Pancreas (tissue), 10 donors: ENCODE measurements at regions of chr7 and their contacts with region 1.

Region 1: DNA sequence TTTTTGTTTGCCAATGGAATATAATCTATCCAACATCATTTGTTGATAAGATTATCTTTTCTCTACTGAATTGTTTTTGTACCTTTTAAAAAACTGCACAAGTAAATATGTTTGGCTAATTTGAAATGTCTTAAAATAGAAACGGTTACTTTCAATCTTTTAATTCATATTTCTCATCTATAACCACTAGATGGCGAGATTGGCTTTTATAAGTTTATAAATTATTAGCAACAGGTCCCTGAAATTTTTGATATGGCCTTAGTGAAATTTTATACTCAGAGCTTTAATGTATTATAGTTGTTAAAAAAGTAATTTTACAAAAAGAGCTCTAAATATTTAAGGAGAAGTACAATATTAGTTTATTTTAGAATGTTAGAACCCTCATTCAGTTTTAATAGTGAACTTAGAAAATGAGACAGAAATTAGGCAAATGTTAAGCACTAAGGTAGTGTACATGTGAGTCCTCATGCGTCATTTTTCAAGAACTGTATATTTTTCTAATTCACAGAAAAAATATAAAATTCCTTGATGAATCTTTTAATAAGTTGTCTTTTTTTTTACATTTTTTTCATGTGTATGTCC is 592.5 kb downstream of the ARL4A start:
- DNase-seq: no peak
- ATAC-seq: no peak
- H3K4me3 ChIP-seq: no peak overlapping the region
- H3K27ac ChIP-seq: no peak overlapping the region
- H3K4me1 ChIP-seq: peaks cover 0 to 4% (median 0%) of the 10 kb centered on the region in 3 donors
- H3K27me3 ChIP-seq: peaks cover 0 to 8% (median 0%) of the 10 kb centered on the region in 4 donors
- CTCF ChIP-seq: peak in 3 of 4 donors; percentile 26 to 28 (median 27)

Region 2: DNA sequence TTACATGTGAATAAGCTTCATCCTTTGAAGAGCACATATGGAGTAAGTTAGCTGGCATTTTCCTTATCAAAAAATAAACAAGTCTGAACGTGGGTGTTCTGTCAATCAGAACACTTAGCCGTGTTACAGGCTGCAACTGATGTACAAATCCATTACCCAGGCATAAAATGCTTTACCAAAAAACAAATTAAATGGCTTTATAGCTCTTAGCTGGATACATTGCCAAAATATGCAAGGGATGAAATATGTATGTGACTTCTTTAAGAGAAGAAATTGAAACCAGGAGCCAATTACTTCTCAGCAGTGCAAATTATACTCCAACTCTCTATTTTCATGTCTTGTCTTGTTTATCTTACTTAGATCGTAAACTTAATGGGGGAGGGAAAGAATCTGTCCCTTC is 1407.8 kb after region 1 on chr7:
- intact Hi-C with region 1: loop called in 1 of 3 experiments (anchors 10 kb)
- DNase-seq: no peak
- ATAC-seq: peak in 3 of 4 donors; percentile 40 to 79 (median 56)
- H3K4me3 ChIP-seq: no peak overlapping the region
- H3K27ac ChIP-seq: no peak overlapping the region
- H3K4me1 ChIP-seq: peaks cover 0 to 6% (median 5%) of the 10 kb centered on the region in 3 donors
- H3K27me3 ChIP-seq: no peaks in the 10 kb centered on the region
- CTCF ChIP-seq: no peak